ENCODE measurements at regions of chr3 and their contacts with region 1.

Region 1: DNA sequence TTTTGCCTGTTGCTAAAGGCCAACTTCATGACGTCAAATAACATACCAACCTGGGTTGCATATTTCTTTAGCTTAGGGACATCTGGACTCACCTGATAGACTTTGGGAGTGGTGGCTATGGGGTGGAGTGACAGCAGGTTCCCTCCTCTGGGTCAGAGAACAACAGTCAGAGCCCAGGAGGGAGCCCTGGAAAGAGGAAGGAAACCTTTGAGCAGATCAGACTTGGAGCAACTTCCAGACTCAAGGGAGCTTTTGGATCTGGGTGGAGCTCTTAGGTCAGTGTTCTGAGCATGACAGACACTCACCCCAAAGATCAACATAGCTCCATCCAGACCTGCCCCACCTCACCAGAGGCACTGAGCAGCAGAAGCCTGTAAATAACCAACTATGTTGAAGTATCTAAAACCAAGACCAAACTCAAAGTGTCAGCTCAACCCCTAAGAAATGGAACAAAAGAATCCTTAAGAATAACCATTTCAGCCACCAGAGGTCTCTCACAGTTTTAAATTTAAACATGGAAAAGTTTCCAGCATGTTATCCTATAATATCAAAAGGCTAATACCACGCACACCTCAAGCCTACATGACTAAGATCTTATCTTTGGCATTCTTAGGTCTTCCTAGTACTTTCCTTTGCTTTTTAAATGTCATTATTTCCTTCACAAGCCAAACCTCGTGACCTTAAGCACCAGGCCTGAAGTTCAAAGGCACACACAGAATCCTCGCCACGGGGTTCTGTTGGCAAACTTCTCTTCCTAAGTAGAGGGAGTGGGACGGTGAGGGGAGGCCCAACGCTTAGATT is 56.4 kb downstream of the UMPS start:
- DNase-seq: no peak
- ATAC-seq: no peak
- H3K4me3 ChIP-seq: no peak overlapping the region
- H3K27ac ChIP-seq: no peak overlapping the region
- H3K4me1 ChIP-seq: peaks cover 15% of the 10 kb centered on the region
- H3K27me3 ChIP-seq: no peaks in the 10 kb centered on the region
- CTCF ChIP-seq: peak in 1 of 3 experiments; percentile 18; a peak in 1 of 6 replicates
- EP300 ChIP-seq: no peak
- POLR2A ChIP-seq: no peak
- RAD21 ChIP-seq: no peak

Region 2: DNA sequence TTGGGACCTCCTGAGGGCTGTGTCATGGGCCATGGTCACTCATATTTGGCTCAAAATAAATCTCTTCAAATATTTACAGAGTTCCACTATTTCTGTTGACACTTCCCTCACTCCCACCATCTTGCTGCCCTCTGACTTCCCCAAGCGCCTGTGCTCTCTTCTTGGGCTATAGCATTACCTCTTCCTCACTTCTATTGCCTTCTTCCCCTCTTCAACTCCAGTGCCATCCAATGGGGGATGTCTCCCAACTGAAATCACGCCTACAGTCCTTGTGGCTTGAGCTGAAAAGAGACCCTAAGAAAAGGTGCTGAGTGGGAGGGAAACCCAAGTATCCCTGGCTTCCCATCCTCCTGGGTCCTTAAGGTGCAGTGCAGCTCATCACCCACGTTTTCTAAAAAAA is 34.6 kb before region 1 on chr3:
- CTCF ChIA-PET with region 1: no interaction called
- POLR2A ChIA-PET with region 1: no interaction called
- RAD21 ChIA-PET with region 1: no interaction called
- SMC1A ChIA-PET with region 1: no interaction called
- in situ Hi-C with region 1: no loop called
- intact Hi-C with region 1: no loop called
- DNase-seq: no peak
- ATAC-seq: no peak
- H3K4me3 ChIP-seq: no peak overlapping the region
- H3K27ac ChIP-seq: no peak overlapping the region
- H3K4me1 ChIP-seq: no peaks in the 10 kb centered on the region
- H3K27me3 ChIP-seq: no peaks in the 10 kb centered on the region
- CTCF ChIP-seq: no peak
- EP300 ChIP-seq: no peak
- POLR2A ChIP-seq: no peak
- RAD21 ChIP-seq: no peak

Region 3: DNA sequence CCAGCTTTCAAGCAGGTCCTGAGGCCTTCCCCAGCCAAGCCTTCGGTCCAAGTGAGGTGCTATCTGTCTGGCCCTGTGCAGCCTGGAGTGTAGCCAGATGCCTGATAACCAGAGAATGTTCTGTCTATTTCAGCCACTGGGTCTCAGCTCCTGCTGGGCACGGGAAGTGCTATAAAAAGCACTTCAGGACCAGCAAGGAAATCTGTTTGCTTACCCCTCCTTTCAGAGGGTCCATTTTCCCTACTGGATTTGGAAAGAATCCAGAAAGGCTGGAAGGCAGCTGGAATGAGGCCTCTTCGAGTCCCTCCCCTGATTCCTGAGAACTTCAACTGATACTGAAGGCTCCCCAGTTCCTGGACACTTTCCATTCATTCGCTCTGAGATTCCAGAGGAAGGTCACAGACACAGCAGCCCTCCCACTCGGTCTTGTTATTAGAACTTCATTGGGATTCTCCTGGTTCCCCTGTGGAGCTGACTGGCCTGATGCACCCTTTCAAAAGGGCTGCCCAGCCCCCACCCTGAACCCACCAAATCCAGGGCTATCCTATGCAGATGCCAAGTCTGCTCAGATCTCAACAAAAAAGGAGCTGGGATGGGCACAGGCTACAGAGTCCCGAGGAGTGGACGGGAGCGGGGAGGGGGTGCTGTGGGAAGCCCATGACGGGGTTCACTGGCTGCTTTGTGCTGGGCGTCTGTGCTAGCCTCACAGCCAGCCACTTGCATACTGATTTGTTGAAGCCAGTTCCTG is 14.0 kb after region 1 on chr3:
- CTCF ChIA-PET with region 1: interaction called, 19 read pairs
- POLR2A ChIA-PET with region 1: no interaction called
- RAD21 ChIA-PET with region 1: interaction called, 3 read pairs
- SMC1A ChIA-PET with region 1: interaction called, 14 read pairs
- in situ Hi-C with region 1: no loop called
- intact Hi-C with region 1: no loop called
- DNase-seq: no peak
- ATAC-seq: peak; percentile 27; the same call in 1 of the 3 replicates
- H3K4me3 ChIP-seq: no peak overlapping the region
- H3K27ac ChIP-seq: no peak overlapping the region
- H3K4me1 ChIP-seq: no peaks in the 10 kb centered on the region
- H3K27me3 ChIP-seq: peaks cover 0 to 4% of the 10 kb centered on the region in 2 experiments; a peak in 1 of 4 replicates
- CTCF ChIP-seq: no peak
- EP300 ChIP-seq: no peak
- POLR2A ChIP-seq: no peak
- RAD21 ChIP-seq: no peak

Region 4: GRCh38 chr3:124812291-124813265 is 25.9 kb after region 1 on chr3:
- CTCF ChIA-PET with region 1: interaction called, 10 read pairs
- POLR2A ChIA-PET with region 1: interaction called, 4 read pairs
- RAD21 ChIA-PET with region 1: interaction called, 4 read pairs
- SMC1A ChIA-PET with region 1: interaction called, 22 read pairs
- in situ Hi-C with region 1: no loop called
- intact Hi-C with region 1: no loop called
- DNase-seq: no peak
- ATAC-seq: peak; percentile 90
- H3K4me3 ChIP-seq: no peak overlapping the region
- H3K27ac ChIP-seq: no peak overlapping the region
- H3K4me1 ChIP-seq: no peaks in the 10 kb centered on the region
- H3K27me3 ChIP-seq: no peaks in the 10 kb centered on the region; a peak in 2 of 4 replicates
- CTCF ChIP-seq: no peak
- EP300 ChIP-seq: no peak
- POLR2A ChIP-seq: no peak
- RAD21 ChIP-seq: no peak

Region 5: GRCh38 chr3:124895756-124896155 is 109.1 kb after region 1 on chr3:
- CTCF ChIA-PET with region 1: interaction called, 80 read pairs
- POLR2A ChIA-PET with region 1: no interaction called
- RAD21 ChIA-PET with region 1: interaction called, 30 read pairs
- SMC1A ChIA-PET with region 1: interaction called, 29 read pairs
- in situ Hi-C with region 1: no loop called
- intact Hi-C with region 1: no loop called
- DNase-seq: no peak
- ATAC-seq: no peak
- H3K4me3 ChIP-seq: no peak overlapping the region
- H3K27ac ChIP-seq: no peak overlapping the region
- H3K4me1 ChIP-seq: no peaks in the 10 kb centered on the region; the same call in 1 of the 2 replicates
- H3K27me3 ChIP-seq: no peaks in the 10 kb centered on the region
- CTCF ChIP-seq: no peak
- EP300 ChIP-seq: no peak
- POLR2A ChIP-seq: no peak
- RAD21 ChIP-seq: no peak

Region 6: DNA sequence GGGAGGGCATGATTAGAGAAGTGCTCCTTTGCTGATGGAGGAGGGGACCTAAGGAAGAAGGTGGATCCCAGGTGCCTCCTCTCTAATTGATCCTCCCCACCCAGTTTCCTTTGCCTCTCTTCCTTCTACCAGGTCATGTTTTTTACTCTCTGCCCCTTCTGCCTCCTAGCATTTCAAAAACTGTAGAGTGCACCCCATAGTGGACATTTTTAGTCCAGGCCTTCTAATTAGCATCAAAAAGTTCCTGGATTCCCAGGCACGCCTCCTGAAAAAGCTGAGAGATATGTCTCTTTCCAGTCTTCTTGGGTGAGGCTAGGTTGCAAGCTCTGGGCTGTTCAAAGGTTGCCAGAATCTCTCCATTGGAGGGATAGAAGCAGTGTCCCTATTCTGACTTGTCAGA is 119.2 kb after region 1 on chr3:
- CTCF ChIA-PET with region 1: interaction called, 80 read pairs
- POLR2A ChIA-PET with region 1: no interaction called
- RAD21 ChIA-PET with region 1: interaction called, 30 read pairs
- SMC1A ChIA-PET with region 1: interaction called, 29 read pairs
- in situ Hi-C with region 1: no loop called
- intact Hi-C with region 1: no loop called
- DNase-seq: no peak
- ATAC-seq: no peak
- H3K4me3 ChIP-seq: no peak overlapping the region
- H3K27ac ChIP-seq: no peak overlapping the region
- H3K4me1 ChIP-seq: no peaks in the 10 kb centered on the region
- H3K27me3 ChIP-seq: no peaks in the 10 kb centered on the region; a peak in 2 of 4 replicates
- CTCF ChIP-seq: no peak
- EP300 ChIP-seq: no peak
- POLR2A ChIP-seq: no peak
- RAD21 ChIP-seq: no peak

Region 7: GRCh38 chr3:125573216-125573615 is 786.6 kb after region 1 on chr3:
- CTCF ChIA-PET with region 1: no interaction called
- POLR2A ChIA-PET with region 1: no interaction called
- RAD21 ChIA-PET with region 1: no interaction called
- SMC1A ChIA-PET with region 1: no interaction called
- in situ Hi-C with region 1: no loop called
- intact Hi-C with region 1: no loop called
- DNase-seq: no peak
- ATAC-seq: no peak
- H3K4me3 ChIP-seq: no peak overlapping the region
- H3K27ac ChIP-seq: no peak overlapping the region
- H3K4me1 ChIP-seq: no peaks in the 10 kb centered on the region
- H3K27me3 ChIP-seq: no peaks in the 10 kb centered on the region
- CTCF ChIP-seq: no peak
- EP300 ChIP-seq: no peak
- POLR2A ChIP-seq: no peak
- RAD21 ChIP-seq: no peak

Measured in GM12878 (cell line).